Naive thymus-derived CD4-positive, alpha-beta T cell (primary cell): ENCODE measurements at regions of chr6 and their contacts with region 1.

Region 1: DNA sequence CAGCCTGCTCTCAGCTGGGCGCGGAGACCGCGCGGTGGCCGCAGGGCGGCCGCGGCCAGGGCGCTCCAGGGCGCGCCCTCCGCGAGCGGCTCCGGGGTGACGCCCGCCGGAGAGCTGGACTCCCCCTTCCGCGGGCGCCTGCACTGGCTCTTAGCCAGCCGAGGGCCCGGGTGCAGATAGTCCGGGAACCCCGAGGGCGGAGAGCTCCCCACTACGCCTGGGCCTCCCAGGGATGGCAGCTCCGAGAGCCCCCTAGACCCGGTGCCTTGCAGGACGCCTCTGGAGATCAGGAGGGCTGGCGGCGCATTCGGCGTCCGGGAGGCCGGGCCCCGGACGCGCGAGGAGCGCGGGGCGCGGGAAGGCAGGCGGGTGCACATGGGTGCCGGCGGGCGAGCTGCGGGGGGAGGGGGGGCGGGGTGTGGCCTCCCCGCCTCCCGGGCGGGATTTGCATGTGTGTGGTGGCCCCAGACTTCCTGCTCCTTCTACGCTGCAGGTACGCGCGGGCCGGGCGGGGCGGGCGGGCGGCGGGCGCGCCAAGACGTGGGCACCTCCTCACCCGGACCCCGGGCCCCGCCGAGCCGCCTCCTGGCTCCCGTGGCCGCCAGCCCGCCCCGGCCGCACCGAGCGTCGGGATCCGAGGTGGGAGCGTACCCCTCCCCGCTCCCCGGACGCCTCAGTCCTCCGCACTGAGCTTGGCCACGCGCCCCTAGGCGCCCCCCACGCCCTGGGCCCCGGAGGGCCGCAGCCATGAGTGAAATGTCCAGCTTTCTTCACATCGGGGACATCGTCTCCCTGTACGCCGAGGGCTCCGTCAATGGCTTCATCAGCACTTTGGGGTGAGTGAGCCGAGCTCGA is at the start of gene ITPR3:
- DNase-seq: peak; percentile 63 to 83 (median 80)
- ATAC-seq: peak; percentile 94
- H3K4me3 ChIP-seq: peak within 1 kb of the TSS; percentile 80
- H3K4me3 Mint-ChIP-seq: peak within 1 kb of the TSS; percentile 91 to 97 (median 96)
- H3K27ac ChIP-seq: peak within 1 kb of the TSS; percentile 97
- H3K27ac Mint-ChIP-seq: peak within 1 kb of the TSS; percentile 82 to 96 (median 94)
- H3K4me1 ChIP-seq: peaks cover 9 to 35% of the 10 kb centered on the region in 2 donors
- H3K4me1 Mint-ChIP-seq: peaks cover 29 to 74% (median 66%) of the 10 kb centered on the region in 7 donors
- H3K27me3 ChIP-seq: no peaks in the 10 kb centered on the region
- H3K27me3 Mint-ChIP-seq: peaks cover 0 to 2% (median 0%) of the 10 kb centered on the region in 5 donors
- total RNA-seq, gene ITPR3: 35.6 to 65.7 (median 47.7) TPM

Region 2: GRCh38 chr6:33397541-33397940 is 223.5 kb before region 1 on chr6:
- CTCF ChIA-PET with region 1: no interaction called
- POLR2A ChIA-PET with region 1: no interaction called
- intact Hi-C with region 1: no loop called
- DNase-seq: no peak
- ATAC-seq: no peak
- H3K4me3 ChIP-seq: no peak overlapping the region
- H3K4me3 Mint-ChIP-seq: no peak overlapping the region
- H3K27ac ChIP-seq: no peak overlapping the region
- H3K27ac Mint-ChIP-seq: peak overlapping the region in 2 of 9 donors; percentile 6 to 66
- H3K4me1 ChIP-seq: peaks cover 0 to 1% of the 10 kb centered on the region in 2 donors
- H3K4me1 Mint-ChIP-seq: peaks cover under 1 to 38% (median 7%) of the 10 kb centered on the region in 7 donors
- H3K27me3 ChIP-seq: no peaks in the 10 kb centered on the region
- H3K27me3 Mint-ChIP-seq: no peaks in the 10 kb centered on the region

Region 3: DNA sequence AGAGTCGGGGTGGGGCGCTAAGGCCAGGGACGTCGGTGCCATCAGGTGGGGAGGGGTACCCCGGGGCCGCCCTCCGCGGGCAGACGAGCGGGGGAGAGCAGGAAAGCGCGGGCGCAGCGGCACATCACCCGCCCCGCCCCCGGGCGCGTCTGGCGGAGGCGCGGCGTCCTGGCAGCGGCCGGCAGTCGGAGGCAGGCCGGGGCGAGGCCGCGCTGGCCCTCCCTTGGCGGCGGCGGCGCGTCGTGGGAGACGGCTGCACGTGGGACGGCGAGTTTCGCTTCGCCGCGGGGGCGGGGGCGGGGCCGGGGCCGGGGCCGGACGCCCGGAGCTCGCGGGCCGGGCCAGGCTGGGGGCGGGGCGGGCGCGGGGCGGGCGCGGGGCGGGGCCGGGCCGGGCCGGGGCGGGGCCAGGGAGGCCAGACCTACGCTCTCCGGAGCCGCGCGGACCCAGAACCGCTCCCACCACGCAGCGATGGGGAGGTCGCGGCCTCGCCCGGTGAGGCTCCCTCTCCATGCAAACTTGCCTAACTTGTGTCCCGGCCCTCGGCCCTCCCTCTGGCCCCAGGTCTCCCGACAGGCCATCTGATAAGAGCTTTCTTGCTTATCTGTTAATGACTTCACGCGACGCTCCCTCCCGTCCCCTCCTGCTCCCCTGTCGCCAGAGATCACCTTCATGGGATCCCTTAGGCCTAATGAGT is 12.5 kb after region 1 on chr6:
- CTCF ChIA-PET with region 1: interaction called, 7 read pairs
- POLR2A ChIA-PET with region 1: interaction called, 14 read pairs
- intact Hi-C with region 1: loop called (anchors 1 kb)
- DNase-seq: peak; percentile 30 to 77 (median 46)
- ATAC-seq: peak; percentile 88
- H3K4me3 ChIP-seq: peak overlapping the region; percentile 43
- H3K4me3 Mint-ChIP-seq: peak overlapping the region; percentile 87 to 94 (median 89)
- H3K27ac ChIP-seq: peak overlapping the region; percentile 56
- H3K27ac Mint-ChIP-seq: peak overlapping the region; percentile 46 to 89 (median 73)
- H3K4me1 ChIP-seq: peaks cover 20 to 32% of the 10 kb centered on the region in 2 donors
- H3K4me1 Mint-ChIP-seq: peaks cover 47 to 79% (median 70%) of the 10 kb centered on the region in 7 donors
- H3K27me3 ChIP-seq: no peaks in the 10 kb centered on the region
- H3K27me3 Mint-ChIP-seq: peaks cover 0 to 3% (median 0%) of the 10 kb centered on the region in 5 donors

Region 4: GRCh38 chr6:33668927-33669326 is 47.8 kb after region 1 on chr6:
- CTCF ChIA-PET with region 1: no interaction called
- POLR2A ChIA-PET with region 1: no interaction called
- intact Hi-C with region 1: loop called in 1 of 2 experiments (anchors 1 kb)
- DNase-seq: peak in 8 of 9 donors; percentile 37 to 80 (median 70)
- ATAC-seq: peak; percentile 91
- H3K4me3 ChIP-seq: no peak overlapping the region
- H3K4me3 Mint-ChIP-seq: peak overlapping the region in 3 of 10 donors; percentile 26 to 49 (median 40)
- H3K27ac ChIP-seq: peak overlapping the region; percentile 62
- H3K27ac Mint-ChIP-seq: peak overlapping the region; percentile 80 to 93 (median 88)
- H3K4me1 ChIP-seq: peaks cover 0 to 12% of the 10 kb centered on the region in 2 donors
- H3K4me1 Mint-ChIP-seq: peaks cover 3 to 19% (median 15%) of the 10 kb centered on the region in 7 donors
- H3K27me3 ChIP-seq: no peaks in the 10 kb centered on the region
- H3K27me3 Mint-ChIP-seq: no peaks in the 10 kb centered on the region

Region 5: GRCh38 chr6:33694401-33694931 is 73.4 kb after region 1 on chr6:
- CTCF ChIA-PET with region 1: interaction called, 4 read pairs
- POLR2A ChIA-PET with region 1: interaction called, 13 read pairs
- intact Hi-C with region 1: loop called in 1 of 2 experiments (anchors 1 kb)
- DNase-seq: peak; percentile 28 to 70 (median 64)
- ATAC-seq: peak; percentile 68
- H3K4me3 ChIP-seq: no peak overlapping the region
- H3K4me3 Mint-ChIP-seq: peak overlapping the region; percentile 66 to 86 (median 78)
- H3K27ac ChIP-seq: peak overlapping the region; percentile 80
- H3K27ac Mint-ChIP-seq: peak overlapping the region; percentile 88 to 100 (median 96)
- H3K4me1 ChIP-seq: peaks cover 58 to 74% of the 10 kb centered on the region in 2 donors
- H3K4me1 Mint-ChIP-seq: peaks cover 33 to 85% (median 74%) of the 10 kb centered on the region in 7 donors
- H3K27me3 ChIP-seq: no peaks in the 10 kb centered on the region
- H3K27me3 Mint-ChIP-seq: no peaks in the 10 kb centered on the region

Region 6: GRCh38 chr6:33812669-33813068 is 191.6 kb after region 1 on chr6:
- CTCF ChIA-PET with region 1: no interaction called
- POLR2A ChIA-PET with region 1: no interaction called
- intact Hi-C with region 1: no loop called
- DNase-seq: peak in 4 of 9 donors; percentile 22 to 61 (median 26)
- ATAC-seq: no peak
- H3K4me3 ChIP-seq: no peak overlapping the region
- H3K4me3 Mint-ChIP-seq: no peak overlapping the region
- H3K27ac ChIP-seq: no peak overlapping the region
- H3K27ac Mint-ChIP-seq: no peak overlapping the region
- H3K4me1 ChIP-seq: peaks cover 5 to 7% of the 10 kb centered on the region in 2 donors
- H3K4me1 Mint-ChIP-seq: peaks cover 10 to 22% (median 17%) of the 10 kb centered on the region in 7 donors
- H3K27me3 ChIP-seq: peaks cover 0 to 6% of the 10 kb centered on the region in 2 donors
- H3K27me3 Mint-ChIP-seq: peaks cover 30 to 68% (median 61%) of the 10 kb centered on the region in 5 donors